GM10248 (cell line): ENCODE measurements at regions of chr16 and their contacts with region 1.

Region 1: GRCh38 chr16:86016201-86016871 is 117.4 kb downstream of the IRF8 start:
- DNase-seq: peak; percentile 76
- CTCF ChIP-seq: peak; percentile 67

Region 2: DNA sequence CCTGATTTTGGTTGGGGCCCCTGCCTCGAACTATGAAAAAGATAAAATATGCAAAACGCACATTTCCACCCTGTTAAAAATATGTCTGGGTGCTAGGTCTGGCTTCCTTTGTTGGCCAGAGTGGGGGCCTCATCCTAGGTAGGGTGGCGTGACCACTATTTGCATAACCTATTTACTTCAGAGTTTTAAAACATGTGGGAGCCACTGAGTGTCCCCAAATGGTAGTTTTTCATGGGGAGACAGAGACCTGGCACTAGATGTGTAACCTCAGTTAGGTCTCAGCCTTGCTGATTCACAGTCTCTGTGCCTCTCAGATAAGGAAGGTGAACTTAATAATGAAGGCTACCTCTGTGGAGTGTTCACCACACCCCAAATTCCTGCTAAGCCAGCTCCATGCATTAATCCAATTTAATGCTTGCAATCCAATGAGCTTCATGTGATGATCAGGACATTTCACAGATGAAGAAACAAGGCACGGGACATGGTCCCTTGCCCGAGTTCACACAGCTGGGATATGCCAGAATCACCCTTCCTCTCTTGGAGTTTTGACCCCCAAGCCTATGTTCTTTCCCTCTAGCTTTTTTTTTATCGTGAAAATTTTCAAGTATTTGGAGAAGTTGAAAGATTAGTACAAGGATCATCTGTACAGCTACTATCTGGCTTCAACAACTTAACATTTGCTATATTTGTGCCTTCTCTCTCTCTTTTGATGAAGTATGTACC is 14.0 kb before region 1 on chr16:
- CTCF ChIA-PET with region 1: interaction called, 27 read pairs
- POLR2A ChIA-PET with region 1: no interaction called
- DNase-seq: no peak
- CTCF ChIP-seq: no peak

Region 3: GRCh38 chr16:86044881-86045590 is 28.7 kb after region 1 on chr16:
- CTCF ChIA-PET with region 1: no interaction called
- POLR2A ChIA-PET with region 1: no interaction called
- DNase-seq: no peak
- CTCF ChIP-seq: no peak